Endothelial cell of umbilical vein (primary cell): ENCODE measurements at regions of chr4 and their contacts with region 1.

Region 1: DNA sequence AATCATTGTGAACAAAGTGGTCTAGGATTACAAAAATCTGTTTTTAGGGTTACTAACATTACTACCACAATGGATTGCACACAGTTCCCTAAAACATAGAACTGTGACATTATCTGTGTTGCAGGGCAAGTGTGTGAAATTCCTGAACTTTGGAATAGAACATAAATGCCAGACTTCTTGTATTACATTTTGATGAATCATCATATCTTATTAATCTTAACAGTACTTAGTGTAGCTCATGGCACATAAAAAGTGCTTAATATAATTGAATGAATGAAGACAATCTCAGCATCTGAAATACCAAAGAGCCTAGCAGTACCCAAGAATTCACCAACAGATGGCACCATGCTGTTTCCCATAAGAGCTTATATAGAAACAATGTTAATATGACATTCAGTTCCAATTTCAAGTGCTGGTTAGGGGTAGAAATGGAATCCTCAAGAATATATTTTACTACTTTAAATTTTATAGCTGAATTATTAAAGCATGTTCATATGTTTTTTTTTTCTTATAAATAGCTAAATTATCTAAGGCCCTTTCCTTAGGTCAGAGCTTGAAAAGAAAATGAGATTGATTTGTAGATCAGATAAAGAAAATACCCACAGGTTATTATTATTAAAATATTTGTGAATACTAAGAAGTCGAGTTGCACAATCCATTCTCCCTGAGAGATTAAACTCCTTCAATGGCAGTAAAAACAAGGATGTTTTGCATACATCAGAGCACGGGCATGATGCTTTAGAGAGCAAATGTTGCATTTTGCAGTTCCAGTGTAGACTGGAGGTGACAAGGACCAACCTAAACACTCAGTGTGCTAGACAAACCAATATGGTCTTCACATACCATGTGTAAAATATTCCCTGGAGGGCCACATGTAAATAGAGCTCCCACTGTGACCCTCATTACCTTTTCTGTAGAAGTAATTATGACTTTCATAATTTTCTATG is 25.7 kb upstream of the SHISA3 start:
- DNase-seq: peak; percentile 79
- H3K4me3 ChIP-seq: no peak overlapping the region
- H3K27ac ChIP-seq: no peak overlapping the region
- H3K4me1 ChIP-seq: no peaks in the 10 kb centered on the region
- H3K27me3 ChIP-seq: no peaks in the 10 kb centered on the region
- CTCF ChIP-seq: peak; percentile 41 to 58
- POLR2A ChIP-seq: no peak

Region 2: DNA sequence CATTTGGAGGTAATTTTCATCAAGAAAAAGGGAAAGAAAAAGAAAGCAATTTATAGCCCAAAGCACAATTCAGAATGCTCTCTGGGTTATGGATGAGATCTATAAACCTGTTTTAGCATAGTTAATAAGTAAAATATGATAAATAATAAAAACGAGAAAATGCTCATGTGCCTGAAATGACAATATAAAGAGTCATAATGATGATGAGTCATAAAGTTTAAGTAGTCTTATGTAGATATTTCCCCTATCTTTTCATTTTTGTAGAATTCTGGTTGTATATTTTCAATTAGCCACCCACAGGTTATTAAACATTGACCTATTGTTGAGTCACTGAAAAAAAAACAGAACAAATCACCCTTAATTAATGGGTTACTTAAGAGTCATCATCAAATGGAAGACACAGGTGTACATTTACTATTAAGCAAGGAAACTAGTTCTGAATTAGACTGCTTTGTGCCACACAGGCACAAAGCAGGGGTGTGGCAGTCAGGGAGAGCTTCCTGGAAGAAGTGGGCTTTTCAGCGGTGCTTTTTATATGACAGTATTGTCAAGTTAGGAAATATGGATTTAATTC is 248.4 kb before region 1 on chr4:
- CTCF ChIA-PET with region 1: no interaction called
- POLR2A ChIA-PET with region 1: no interaction called
- dilution Hi-C with region 1: no loop called
- intact Hi-C with region 1: no loop called
- DNase-seq: no peak
- H3K4me3 ChIP-seq: no peak overlapping the region
- H3K27ac ChIP-seq: no peak overlapping the region
- H3K4me1 ChIP-seq: no peaks in the 10 kb centered on the region
- H3K27me3 ChIP-seq: no peaks in the 10 kb centered on the region
- CTCF ChIP-seq: no peak
- POLR2A ChIP-seq: no peak

Region 3: GRCh38 chr4:42339935-42340406 is 31.6 kb before region 1 on chr4:
- CTCF ChIA-PET with region 1: interaction called, 22 read pairs
- POLR2A ChIA-PET with region 1: no interaction called
- dilution Hi-C with region 1: no loop called
- intact Hi-C with region 1: no loop called
- DNase-seq: peak; percentile 88
- H3K4me3 ChIP-seq: peak overlapping the region in 1 of 3 experiments; percentile 9
- H3K27ac ChIP-seq: peak overlapping the region; percentile 94
- H3K4me1 ChIP-seq: peaks cover 25% of the 10 kb centered on the region
- H3K27me3 ChIP-seq: no peaks in the 10 kb centered on the region
- CTCF ChIP-seq: no peak
- POLR2A ChIP-seq: peak; percentile 57

Region 4: GRCh38 chr4:42397635-42398447 is 26.3 kb after region 1 on chr4:
- CTCF ChIA-PET with region 1: interaction called, 24 read pairs
- POLR2A ChIA-PET with region 1: no interaction called
- dilution Hi-C with region 1: no loop called
- intact Hi-C with region 1: no loop called
- DNase-seq: peak; percentile 56
- H3K4me3 ChIP-seq: peak overlapping the region; percentile 55 to 78 (median 75)
- H3K27ac ChIP-seq: peak overlapping the region; percentile 26
- H3K4me1 ChIP-seq: peaks cover 14% of the 10 kb centered on the region
- H3K27me3 ChIP-seq: no peaks in the 10 kb centered on the region
- CTCF ChIP-seq: no peak
- POLR2A ChIP-seq: no peak

Region 5: DNA sequence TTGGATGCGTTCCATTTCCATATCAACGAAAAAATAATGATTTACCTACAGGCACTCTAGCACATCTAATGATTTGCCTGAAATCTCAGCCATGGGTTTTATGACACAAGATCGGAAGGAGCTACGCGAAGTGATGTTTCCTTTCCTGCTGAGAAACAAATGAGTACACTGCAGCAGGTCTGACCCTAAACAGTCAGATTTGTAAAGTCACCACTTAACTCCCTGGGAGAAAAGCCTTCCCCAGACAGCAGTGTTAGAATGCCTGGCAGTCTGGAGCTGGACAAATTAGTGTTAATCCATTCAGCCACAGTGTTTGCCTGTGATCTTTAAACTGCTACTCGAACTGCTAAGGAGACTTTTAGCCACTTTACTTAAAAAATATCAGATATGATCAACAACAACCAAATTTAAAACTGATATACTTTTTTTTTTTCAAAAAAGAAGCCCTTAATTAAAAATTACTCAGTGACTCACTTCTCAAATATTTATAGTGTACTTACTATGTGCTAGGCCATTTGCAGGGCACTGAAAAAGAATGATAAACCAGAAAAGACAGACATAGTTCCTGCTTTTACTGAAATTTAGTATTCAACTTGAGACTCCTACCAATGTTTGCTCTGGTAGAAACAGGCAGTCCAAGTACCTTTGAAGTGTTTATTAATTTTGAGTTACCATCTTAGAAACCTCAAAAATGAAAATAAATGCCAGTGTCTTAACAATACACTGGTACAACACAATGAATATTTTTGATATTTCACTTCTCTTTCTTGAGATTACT is 130.2 kb after region 1 on chr4:
- CTCF ChIA-PET with region 1: interaction called, 13 read pairs
- POLR2A ChIA-PET with region 1: no interaction called
- dilution Hi-C with region 1: no loop called
- intact Hi-C with region 1: no loop called
- DNase-seq: peak; percentile 9
- H3K4me3 ChIP-seq: no peak overlapping the region
- H3K27ac ChIP-seq: no peak overlapping the region
- H3K4me1 ChIP-seq: no peaks in the 10 kb centered on the region
- H3K27me3 ChIP-seq: no peaks in the 10 kb centered on the region
- CTCF ChIP-seq: no peak
- POLR2A ChIP-seq: no peak

Region 6: GRCh38 chr4:42519803-42520417 is 148.3 kb after region 1 on chr4:
- CTCF ChIA-PET with region 1: interaction called, 456 read pairs
- POLR2A ChIA-PET with region 1: interaction called, 3 read pairs
- dilution Hi-C with region 1: no loop called
- intact Hi-C with region 1: loop called (anchors 1 kb)
- DNase-seq: peak; percentile 74
- H3K4me3 ChIP-seq: no peak overlapping the region
- H3K27ac ChIP-seq: no peak overlapping the region
- H3K4me1 ChIP-seq: no peaks in the 10 kb centered on the region
- H3K27me3 ChIP-seq: peaks cover 3 to 7% of the 10 kb centered on the region in 2 experiments
- CTCF ChIP-seq: peak; percentile 25 to 31
- POLR2A ChIP-seq: no peak